Dendritic cell treated with granulocyte-macrophage colony-stimulating factor and Interleukin-4, amounts not matched to agents 40 ng/mL and 50 ng/mL, for 4 days (primary cell): ENCODE measurements at regions of chr10 and their contacts with region 1.

Region 1: GRCh38 chr10:117226824-117227451 is 14.0 kb upstream of the SLC18A2 start:
- H3K4me3 Mint-ChIP-seq: no peak overlapping the region
- H3K27ac Mint-ChIP-seq: no peak overlapping the region
- H3K4me1 Mint-ChIP-seq: peaks cover 6% of the 10 kb centered on the region
- H3K27me3 Mint-ChIP-seq: peaks cover 26% of the 10 kb centered on the region

Region 2: DNA sequence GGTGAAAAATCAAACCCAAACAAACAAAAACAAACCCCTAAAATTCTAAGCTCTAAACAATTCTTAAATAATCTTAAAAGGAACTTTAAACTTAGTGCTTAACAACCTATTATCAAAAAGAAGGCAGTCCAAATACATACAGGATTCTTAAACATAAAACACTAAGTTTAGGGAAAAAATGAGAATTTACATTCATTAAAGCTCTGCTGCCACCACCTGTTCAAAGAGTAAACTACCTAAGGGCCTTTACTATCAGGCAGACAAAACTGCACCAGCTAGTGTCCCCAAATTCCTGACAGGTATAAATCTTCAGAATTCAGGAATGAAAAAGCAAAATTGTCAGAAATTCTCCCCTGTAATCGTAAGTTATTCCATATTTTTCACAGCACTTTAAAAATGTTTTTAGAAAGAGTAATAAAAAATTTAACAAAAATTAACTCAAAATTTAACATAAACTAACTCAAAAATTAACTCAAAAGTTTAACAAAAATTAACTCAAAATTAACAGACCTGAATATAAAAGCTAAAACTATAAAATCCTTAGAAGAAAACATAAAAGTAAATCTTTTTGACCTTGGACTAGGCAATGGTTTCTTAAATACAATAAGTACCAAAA is 93.2 kb after region 1 on chr10:
- intact Hi-C with region 1: loop called (anchors 1 kb)
- H3K4me3 Mint-ChIP-seq: no peak overlapping the region
- H3K27ac Mint-ChIP-seq: no peak overlapping the region
- H3K4me1 Mint-ChIP-seq: no peaks in the 10 kb centered on the region
- H3K27me3 Mint-ChIP-seq: no peaks in the 10 kb centered on the region

Region 3: GRCh38 chr10:117442944-117443685 is 216.2 kb after region 1 on chr10:
- intact Hi-C with region 1: loop called (anchors 10 kb)
- H3K4me3 Mint-ChIP-seq: peak overlapping the region; percentile 58
- H3K27ac Mint-ChIP-seq: no peak overlapping the region
- H3K4me1 Mint-ChIP-seq: peaks cover 18% of the 10 kb centered on the region
- H3K27me3 Mint-ChIP-seq: peaks cover 3% of the 10 kb centered on the region